ENCODE measurements at regions of chr10 and their contacts with region 1.

Region 1: DNA sequence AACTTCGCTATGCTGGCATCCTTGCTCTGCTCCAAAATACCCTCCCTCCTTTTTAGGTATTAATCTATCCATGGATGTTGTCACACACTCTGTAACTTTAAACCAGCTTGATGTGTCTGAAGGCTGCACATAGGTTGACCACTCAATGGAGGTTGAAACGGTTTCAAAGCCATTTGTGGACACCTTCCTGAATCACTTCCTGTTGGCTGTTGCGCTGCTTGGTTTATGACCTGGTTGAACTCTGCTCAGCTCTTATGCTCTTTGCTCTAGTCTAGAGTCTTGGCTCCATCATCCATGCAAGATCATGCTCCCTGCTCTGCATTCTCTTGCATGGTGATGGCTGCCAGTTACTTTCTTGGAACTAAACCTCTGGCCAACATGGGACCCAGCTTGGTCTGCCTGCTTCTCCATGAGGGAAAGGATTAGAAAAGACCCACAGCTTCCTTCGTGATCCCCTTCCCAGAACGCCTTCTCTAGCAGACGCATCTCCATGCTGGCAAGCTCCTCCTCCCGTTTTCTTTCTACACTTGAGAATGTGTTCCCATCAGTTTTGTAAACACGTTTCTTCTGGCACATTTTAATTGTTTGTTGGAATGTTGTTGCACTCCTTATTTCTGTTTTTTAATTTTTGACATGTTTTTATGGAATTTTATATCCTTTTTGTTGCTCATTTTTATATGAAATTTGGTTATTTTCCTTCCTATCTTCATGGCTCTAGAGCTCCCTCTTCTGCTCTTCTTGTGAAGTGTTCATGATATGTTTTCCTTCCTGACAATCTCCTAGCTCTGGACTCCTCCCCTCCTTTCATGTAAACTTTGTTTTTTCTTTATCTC is 149.8 kb downstream of the XPNPEP1 start:
- DNase-seq: peak; percentile 43
- ATAC-seq: peak; percentile 85
- H3K4me3 ChIP-seq: no peak overlapping the region
- H3K27ac ChIP-seq: no peak overlapping the region
- H3K4me1 ChIP-seq: no peaks in the 10 kb centered on the region
- H3K27me3 ChIP-seq: no peaks in the 10 kb centered on the region
- CTCF ChIP-seq: peak; percentile 62
- POLR2A ChIP-seq: no peak
- RAD21 ChIP-seq: peak; percentile 66

Region 2: DNA sequence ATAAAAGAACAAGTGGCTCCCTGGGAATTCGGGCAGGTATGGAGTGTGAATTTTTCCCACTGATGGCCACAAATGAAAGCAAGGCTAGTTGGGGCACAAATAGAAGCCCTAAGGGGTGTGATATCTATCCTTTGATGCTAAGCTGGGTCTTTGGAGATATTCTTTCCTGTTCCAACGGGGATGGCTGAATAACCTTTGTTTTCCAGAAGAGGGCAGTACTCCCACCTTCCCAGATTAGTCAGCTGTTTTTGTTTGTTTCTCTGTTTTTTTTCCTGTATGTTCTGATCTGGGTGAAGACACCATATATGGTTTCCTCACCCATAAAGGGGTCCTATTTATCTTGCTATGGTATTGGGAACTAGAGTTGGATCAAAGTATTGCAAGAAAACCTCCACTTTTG is 1661.3 kb before region 1 on chr10:
- CTCF ChIA-PET with region 1: no interaction called
- POLR2A ChIA-PET with region 1: no interaction called
- dilution Hi-C with region 1: no loop called
- in situ Hi-C with region 1: no loop called
- intact Hi-C with region 1: loop called (anchors 5 kb)
- DNase-seq: no peak
- ATAC-seq: no peak
- H3K4me3 ChIP-seq: no peak overlapping the region
- H3K27ac ChIP-seq: no peak overlapping the region
- H3K4me1 ChIP-seq: no peaks in the 10 kb centered on the region
- H3K27me3 ChIP-seq: no peaks in the 10 kb centered on the region
- CTCF ChIP-seq: no peak
- POLR2A ChIP-seq: no peak
- RAD21 ChIP-seq: no peak

Region 3: GRCh38 chr10:110698782-110699201 is 925.3 kb after region 1 on chr10:
- CTCF ChIA-PET with region 1: no interaction called
- POLR2A ChIA-PET with region 1: no interaction called
- dilution Hi-C with region 1: no loop called
- in situ Hi-C with region 1: no loop called
- intact Hi-C with region 1: no loop called
- DNase-seq: peak; percentile 13
- ATAC-seq: peak; percentile 11; the same call in 1 of the 2 replicates
- H3K4me3 ChIP-seq: no peak overlapping the region
- H3K27ac ChIP-seq: no peak overlapping the region
- H3K4me1 ChIP-seq: no peaks in the 10 kb centered on the region; the same call in 1 of the 2 replicates
- H3K27me3 ChIP-seq: no peaks in the 10 kb centered on the region
- CTCF ChIP-seq: no peak
- POLR2A ChIP-seq: no peak
- RAD21 ChIP-seq: no peak

Measured in IMR-90 (cell line).